ENCODE measurements at regions of chr16 and their contacts with region 1.

Region 1: GRCh38 chr16:67935402-67936123 is 1.1 kb downstream of the PSMB10 start:
- DNase-seq: peak in 1 of 2 donors; percentile 97
- H3K4me3 ChIP-seq: peak overlapping the region; percentile 82 to 97
- H3K27ac ChIP-seq: peak overlapping the region; percentile 95
- H3K4me1 ChIP-seq: peaks cover 38% of the 10 kb centered on the region
- H3K27me3 ChIP-seq: no peaks in the 10 kb centered on the region
- CTCF ChIP-seq: no peak
- POLR2A ChIP-seq: peak in 1 of 2 donors; percentile 55

Region 2: GRCh38 chr16:66961065-66961744 is 974.4 kb before region 1 on chr16 and contains the start of gene CES3:
- intact Hi-C with region 1: no loop called
- DNase-seq: no peak
- H3K4me3 ChIP-seq: no peak within 1 kb of the TSS
- H3K27ac ChIP-seq: no peak within 1 kb of the TSS
- H3K4me1 ChIP-seq: peaks cover 8% of the 10 kb centered on the region
- H3K27me3 ChIP-seq: no peaks in the 10 kb centered on the region
- CTCF ChIP-seq: no peak
- POLR2A ChIP-seq: no peak
- total RNA-seq, gene CES3: 0.98 TPM

Region 3: DNA sequence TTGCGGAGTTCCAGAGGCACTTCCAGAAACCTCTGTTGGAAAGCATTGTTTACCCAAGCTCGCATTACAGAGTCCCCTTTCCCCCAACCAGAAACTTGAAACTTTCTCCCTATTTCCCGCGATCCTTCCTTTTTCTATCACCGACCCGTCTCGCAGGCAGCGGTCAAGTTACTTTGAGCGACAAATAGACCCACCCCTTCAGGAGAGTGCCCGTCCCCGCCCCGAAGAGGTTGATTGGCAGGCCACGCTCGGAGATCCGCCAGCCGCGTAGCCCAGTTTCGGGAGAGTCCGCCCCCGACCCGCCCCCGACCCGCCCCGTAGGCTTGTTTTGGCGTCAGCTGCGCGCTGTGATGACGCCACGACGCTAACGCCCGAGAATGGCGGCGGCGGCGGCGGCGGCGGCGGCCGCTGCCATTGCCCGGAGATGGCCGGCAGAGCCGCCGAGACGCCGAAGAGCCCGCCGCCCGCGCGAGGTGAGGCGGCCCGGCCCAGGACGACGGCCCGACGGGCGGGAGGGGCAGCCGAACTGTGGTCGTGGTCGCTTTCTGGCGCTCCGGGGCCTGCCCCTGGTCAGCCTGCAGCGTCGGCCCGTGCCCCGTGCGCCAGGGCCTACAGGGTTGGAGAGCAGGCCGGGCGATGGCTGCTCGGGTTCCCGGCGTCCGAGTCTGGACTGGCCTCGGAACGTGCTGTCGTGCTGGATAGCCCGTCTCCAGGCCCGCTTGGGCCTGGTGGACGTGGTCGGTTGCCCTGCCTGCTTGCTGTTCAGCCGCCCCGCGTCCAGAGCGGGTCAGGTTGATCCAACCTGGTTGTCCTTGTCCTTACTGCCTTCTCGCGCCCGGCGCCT is 42.4 kb before region 1 on chr16 and contains the start of gene PSKH1:
- intact Hi-C with region 1: loop called (anchors 5 kb)
- DNase-seq: peak in 1 of 2 donors; percentile 93
- H3K4me3 ChIP-seq: peak within 1 kb of the TSS; percentile 77 to 93
- H3K27ac ChIP-seq: peak within 1 kb of the TSS; percentile 91
- H3K4me1 ChIP-seq: peaks cover 53% of the 10 kb centered on the region
- H3K27me3 ChIP-seq: no peaks in the 10 kb centered on the region
- CTCF ChIP-seq: no peak
- POLR2A ChIP-seq: peak in 1 of 2 donors; percentile 81
- total RNA-seq, gene PSKH1: 17.4 TPM

Measured in vagina (tissue), 2 donors.